ENCODE measurements at regions of chr2 and their contacts with region 1.

Region 1: DNA sequence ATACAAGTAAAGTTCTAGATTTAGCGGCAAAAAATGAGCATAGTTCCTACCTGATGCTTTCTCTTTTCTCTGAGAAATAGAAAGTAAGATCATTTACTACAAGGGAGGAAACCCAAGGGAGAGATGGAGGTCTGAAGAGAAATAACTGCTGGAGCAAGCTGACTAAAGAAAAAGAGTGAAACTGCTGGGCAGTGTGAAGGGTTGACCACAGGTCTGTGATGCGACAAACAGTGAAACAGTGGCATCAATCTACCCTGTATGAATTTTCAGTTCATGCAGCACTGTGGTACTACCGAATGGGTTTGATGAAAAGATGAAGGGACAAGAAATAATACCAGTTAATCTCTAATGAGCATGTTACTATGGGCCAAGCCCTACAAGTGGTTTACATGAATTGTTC is 52.2 kb downstream of the CUL3 start:
- DNase-seq: no peak

Region 2: DNA sequence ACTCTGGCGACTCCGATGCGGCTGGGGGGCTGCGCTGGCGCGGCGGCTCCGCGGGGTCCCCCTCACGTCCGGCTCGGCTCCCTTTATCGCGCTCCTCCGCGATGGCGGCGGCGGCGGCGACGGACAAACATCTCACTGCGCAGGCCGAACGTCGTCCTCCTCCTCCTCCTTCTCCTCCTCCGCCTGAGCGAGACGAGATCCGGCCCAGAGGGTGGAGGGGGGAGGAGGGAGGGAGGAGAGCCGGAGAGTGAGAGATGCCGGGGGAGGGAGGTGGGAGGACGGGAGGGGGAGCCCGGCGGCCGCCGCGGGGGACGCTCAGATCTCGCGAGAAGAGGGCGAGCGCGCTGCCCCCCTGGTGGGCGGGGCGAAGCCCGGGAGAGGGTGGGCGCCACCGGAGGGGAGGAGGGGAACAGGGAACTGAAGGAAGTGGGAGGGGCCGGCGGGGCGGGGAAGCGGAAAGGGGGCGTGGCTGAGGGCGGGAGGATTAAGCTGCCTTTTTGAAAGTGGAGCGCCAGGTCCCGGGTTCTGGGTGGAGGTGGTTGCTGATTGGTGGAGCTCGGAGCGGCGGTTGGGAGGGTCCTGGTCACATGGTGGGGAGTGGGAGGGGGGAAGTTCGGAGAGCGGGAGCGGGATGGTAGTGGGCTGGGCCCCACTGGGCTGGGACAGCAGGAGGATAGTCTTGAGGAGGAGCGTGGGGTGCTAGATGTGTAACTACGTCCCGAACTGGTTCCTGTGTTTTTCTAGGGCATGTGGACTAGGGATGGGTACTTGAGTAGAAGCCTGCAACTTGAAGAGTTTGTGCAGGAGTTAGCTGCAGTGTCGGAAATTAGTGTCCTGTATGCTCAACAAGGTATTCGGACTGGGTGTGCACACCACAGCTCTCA is 52.5 kb after region 1 on chr2 and contains the start of gene CUL3:
- intact Hi-C with region 1: loop called (anchors 10 kb)
- DNase-seq: peak; percentile 97 to 100 (median 99)

Measured in head of caudate nucleus (tissue), 42 donors.